ENCODE measurements at regions of chr12 and their contacts with region 1.

Region 1: DNA sequence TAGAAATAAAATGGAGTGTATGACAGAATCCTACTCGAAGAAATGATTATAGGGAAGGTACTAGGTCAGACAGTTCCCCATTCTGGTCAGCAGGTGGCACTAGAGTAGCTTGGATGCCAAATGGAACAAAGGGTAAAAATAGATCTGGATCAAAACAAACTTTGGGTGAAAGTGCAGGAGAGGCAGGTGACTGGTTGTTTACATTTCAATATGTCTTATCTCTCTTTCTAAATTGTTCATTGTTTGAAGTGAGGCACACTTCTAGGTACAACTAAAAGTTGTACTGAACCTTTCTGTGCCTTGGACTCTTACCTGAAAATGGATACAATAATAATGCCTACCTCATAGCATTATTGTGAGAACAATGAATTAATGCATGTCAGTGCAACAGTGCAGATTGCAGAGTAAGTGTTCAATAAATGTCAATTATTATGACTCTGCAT is 62.0 kb upstream of the OSBPL8 start:
- DNase-seq: peak; percentile 81
- ATAC-seq: peak; percentile 84
- H3K4me3 Mint-ChIP-seq: no peak overlapping the region
- H3K27ac Mint-ChIP-seq: no peak overlapping the region
- H3K4me1 Mint-ChIP-seq: peaks cover 5% of the 10 kb centered on the region
- H3K27me3 Mint-ChIP-seq: no peaks in the 10 kb centered on the region

Region 2: DNA sequence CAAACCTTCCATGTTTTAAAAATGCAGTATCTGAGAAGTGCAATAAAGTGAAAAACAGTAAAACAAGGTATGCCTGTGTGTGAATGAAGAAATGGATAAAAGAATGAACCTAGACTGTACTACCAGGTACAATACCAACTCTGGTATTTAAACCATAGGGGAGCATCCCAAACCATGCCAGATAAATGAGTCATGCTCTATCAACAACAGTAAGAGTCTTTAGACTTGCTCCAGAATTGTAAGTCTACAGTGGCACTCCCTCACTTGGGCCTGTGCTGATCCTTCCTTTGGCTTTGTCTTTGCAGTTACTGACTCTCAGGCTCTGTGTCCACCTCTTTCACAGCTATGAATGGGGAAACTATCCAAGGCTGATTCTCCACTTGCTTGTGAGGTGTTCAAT is 311.5 kb before region 1 on chr12:
- CTCF ChIA-PET with region 1: no interaction called
- POLR2A ChIA-PET with region 1: no interaction called
- intact Hi-C with region 1: no loop called
- DNase-seq: no peak
- ATAC-seq: no peak
- H3K4me3 Mint-ChIP-seq: no peak overlapping the region
- H3K27ac Mint-ChIP-seq: no peak overlapping the region
- H3K4me1 Mint-ChIP-seq: no peaks in the 10 kb centered on the region
- H3K27me3 Mint-ChIP-seq: peaks cover 24% of the 10 kb centered on the region

Region 3: DNA sequence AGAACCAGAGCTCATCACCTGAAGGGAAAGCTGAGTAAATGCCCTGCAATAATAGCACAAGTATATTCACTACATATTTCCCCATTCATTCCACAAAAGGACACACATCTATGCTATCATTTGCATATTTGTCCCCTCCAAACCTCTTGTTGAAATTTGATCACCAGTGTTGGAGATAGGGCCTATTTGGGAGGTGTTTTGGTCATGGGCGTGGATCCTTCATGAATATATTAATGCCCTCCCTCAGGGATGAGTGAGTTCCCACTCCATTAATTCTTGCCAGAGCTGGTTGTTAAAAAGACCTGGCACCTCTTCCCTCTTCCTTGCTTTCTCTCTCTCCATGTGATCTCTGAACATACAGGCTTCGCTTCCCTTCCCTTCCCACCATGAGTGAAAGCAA is 123.7 kb after region 1 on chr12:
- CTCF ChIA-PET with region 1: no interaction called
- POLR2A ChIA-PET with region 1: no interaction called
- intact Hi-C with region 1: no loop called
- DNase-seq: no peak
- ATAC-seq: no peak
- H3K4me3 Mint-ChIP-seq: no peak overlapping the region
- H3K27ac Mint-ChIP-seq: no peak overlapping the region
- H3K4me1 Mint-ChIP-seq: no peaks in the 10 kb centered on the region
- H3K27me3 Mint-ChIP-seq: peaks cover 3% of the 10 kb centered on the region

Region 4: DNA sequence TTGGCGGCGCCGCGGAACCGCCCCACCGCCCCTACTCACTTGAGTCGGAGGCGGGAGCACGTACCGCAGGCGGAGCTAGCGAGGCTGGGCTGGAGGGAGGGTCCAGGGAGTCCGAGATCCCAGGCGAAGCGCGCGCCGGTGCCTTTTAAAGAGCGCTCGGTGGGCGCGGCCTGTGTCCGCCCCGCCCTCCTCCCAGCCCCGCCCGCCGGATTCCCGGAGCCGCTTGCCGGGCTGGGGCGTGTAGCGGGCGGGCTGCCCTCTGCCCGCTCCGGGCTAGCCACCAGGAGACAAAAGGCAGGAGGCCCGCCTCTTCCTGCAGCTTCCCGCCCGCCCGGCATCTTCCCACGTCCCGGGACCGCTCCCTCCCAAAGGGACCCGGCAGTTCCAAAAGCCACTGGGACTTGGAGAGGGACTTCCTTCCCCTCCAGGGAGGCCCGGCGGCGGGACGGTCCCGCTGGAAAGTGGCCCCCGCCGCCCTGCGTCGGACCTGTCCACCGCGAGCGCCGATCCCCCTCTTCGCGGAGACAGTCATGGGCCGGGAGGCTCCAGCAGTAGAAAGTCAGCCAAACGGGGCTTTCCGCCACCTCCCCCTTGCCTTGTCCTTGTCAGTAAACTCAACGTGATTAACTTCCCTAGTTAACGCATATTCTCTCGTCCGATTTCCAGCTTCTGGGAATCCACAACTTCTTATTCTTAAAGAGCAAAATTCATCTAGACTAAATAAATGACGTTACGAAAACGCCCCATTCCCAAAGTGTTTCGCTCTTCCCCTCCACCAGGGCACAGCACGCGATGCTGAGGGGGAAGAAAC is 257.5 kb after region 1 on chr12 and contains the start of gene CSRP2:
- CTCF ChIA-PET with region 1: no interaction called
- POLR2A ChIA-PET with region 1: no interaction called
- intact Hi-C with region 1: loop called in 1 of 2 experiments (anchors 5 kb)
- DNase-seq: peak; percentile 86
- ATAC-seq: peak; percentile 95
- H3K4me3 Mint-ChIP-seq: peak within 1 kb of the TSS; percentile 76
- H3K27ac Mint-ChIP-seq: peak within 1 kb of the TSS; percentile 23
- H3K4me1 Mint-ChIP-seq: peaks cover 14% of the 10 kb centered on the region
- H3K27me3 Mint-ChIP-seq: peaks cover 37% of the 10 kb centered on the region
- total RNA-seq, gene CSRP2: 1.8 to 2.0 TPM

Region 5: GRCh38 chr12:76927170-76927784 is 305.7 kb after region 1 on chr12:
- CTCF ChIA-PET with region 1: interaction called, 4 read pairs
- POLR2A ChIA-PET with region 1: no interaction called
- intact Hi-C with region 1: loop called (anchors 1 kb)
- DNase-seq: peak; percentile 74
- ATAC-seq: peak; percentile 30
- H3K4me3 Mint-ChIP-seq: no peak overlapping the region
- H3K27ac Mint-ChIP-seq: no peak overlapping the region
- H3K4me1 Mint-ChIP-seq: no peaks in the 10 kb centered on the region
- H3K27me3 Mint-ChIP-seq: peaks cover 2% of the 10 kb centered on the region

Measured in activated CD4-positive, alpha-beta T cell treated with anti-CD3 and anti-CD28 coated beads for 36 hours (primary cell).